Calu3 (cell line): ENCODE measurements at regions of chr20 and their contacts with region 1.

Region 1: GRCh38 chr20:54219751-54220426 is 12.0 kb downstream of the PFDN4 start:
- DNase-seq: peak; percentile 47
- H3K4me3 Mint-ChIP-seq: no peak overlapping the region
- H3K27ac Mint-ChIP-seq: no peak overlapping the region
- H3K4me1 Mint-ChIP-seq: no peaks in the 10 kb centered on the region
- H3K27me3 Mint-ChIP-seq: no peaks in the 10 kb centered on the region
- CTCF ChIP-seq: peak; percentile 80

Region 2: GRCh38 chr20:54267510-54268003 is 47.7 kb after region 1 on chr20:
- CTCF ChIA-PET with region 1: interaction called, 5 read pairs
- intact Hi-C with region 1: loop called (anchors 2 kb)
- DNase-seq: peak; percentile 88
- H3K4me3 Mint-ChIP-seq: peak overlapping the region; percentile 58
- H3K27ac Mint-ChIP-seq: peak overlapping the region; percentile 99
- H3K4me1 Mint-ChIP-seq: peaks cover 47% of the 10 kb centered on the region
- H3K27me3 Mint-ChIP-seq: no peaks in the 10 kb centered on the region
- CTCF ChIP-seq: no peak

Region 3: DNA sequence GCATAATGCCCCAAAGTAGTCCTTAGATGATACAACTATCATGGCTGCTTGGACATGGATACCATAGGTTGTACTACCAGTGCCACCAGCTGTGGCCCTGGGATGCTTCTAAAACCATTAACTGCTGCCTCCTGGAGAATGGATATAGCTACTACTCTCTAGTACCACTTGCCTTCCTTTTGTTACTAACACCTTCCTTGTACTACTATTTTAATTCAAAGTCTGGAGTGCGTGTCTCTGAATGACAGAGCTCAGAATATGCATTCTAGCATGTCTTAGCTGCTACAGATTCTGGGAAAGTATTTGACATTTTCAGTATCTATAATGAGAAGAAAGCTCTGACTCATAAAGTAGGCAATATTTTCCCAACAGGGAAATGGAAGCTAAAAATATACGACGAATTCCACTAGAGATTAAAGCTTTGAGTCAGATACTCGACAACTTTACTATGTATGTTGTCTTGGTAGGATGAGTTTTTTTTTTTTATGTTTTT is 100.3 kb after region 1 on chr20:
- CTCF ChIA-PET with region 1: interaction called, 6 read pairs
- intact Hi-C with region 1: loop called (anchors 2 kb)
- DNase-seq: peak; percentile 13
- H3K4me3 Mint-ChIP-seq: no peak overlapping the region
- H3K27ac Mint-ChIP-seq: no peak overlapping the region
- H3K4me1 Mint-ChIP-seq: peaks cover 9% of the 10 kb centered on the region
- H3K27me3 Mint-ChIP-seq: no peaks in the 10 kb centered on the region
- CTCF ChIP-seq: no peak

Region 4: DNA sequence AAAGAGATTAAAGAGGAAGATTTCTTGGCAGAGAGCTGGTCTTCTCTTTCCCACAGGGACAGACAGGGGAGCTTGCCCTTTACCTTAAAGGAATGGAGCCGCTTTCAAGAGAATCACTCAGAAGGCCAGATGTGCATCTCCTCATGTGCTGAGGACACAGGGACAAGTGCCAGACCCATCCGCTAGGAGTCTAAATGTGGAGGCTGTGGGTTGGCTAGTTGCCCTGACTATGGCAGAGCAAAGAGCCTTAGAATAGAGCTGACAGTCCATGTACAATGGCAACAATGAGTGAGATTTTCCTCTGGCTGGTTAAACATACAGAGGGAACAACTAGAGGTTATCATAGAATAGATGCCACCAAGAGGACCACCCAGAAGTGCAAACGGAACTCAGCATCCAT is 248.2 kb after region 1 on chr20:
- CTCF ChIA-PET with region 1: no interaction called
- intact Hi-C with region 1: loop called (anchors 5 kb)
- DNase-seq: no peak
- H3K4me3 Mint-ChIP-seq: no peak overlapping the region
- H3K27ac Mint-ChIP-seq: no peak overlapping the region
- H3K4me1 Mint-ChIP-seq: no peaks in the 10 kb centered on the region
- H3K27me3 Mint-ChIP-seq: peaks cover 21% of the 10 kb centered on the region
- CTCF ChIP-seq: no peak